ENCODE measurements at regions of chr5 and their contacts with region 1.

Region 1: DNA sequence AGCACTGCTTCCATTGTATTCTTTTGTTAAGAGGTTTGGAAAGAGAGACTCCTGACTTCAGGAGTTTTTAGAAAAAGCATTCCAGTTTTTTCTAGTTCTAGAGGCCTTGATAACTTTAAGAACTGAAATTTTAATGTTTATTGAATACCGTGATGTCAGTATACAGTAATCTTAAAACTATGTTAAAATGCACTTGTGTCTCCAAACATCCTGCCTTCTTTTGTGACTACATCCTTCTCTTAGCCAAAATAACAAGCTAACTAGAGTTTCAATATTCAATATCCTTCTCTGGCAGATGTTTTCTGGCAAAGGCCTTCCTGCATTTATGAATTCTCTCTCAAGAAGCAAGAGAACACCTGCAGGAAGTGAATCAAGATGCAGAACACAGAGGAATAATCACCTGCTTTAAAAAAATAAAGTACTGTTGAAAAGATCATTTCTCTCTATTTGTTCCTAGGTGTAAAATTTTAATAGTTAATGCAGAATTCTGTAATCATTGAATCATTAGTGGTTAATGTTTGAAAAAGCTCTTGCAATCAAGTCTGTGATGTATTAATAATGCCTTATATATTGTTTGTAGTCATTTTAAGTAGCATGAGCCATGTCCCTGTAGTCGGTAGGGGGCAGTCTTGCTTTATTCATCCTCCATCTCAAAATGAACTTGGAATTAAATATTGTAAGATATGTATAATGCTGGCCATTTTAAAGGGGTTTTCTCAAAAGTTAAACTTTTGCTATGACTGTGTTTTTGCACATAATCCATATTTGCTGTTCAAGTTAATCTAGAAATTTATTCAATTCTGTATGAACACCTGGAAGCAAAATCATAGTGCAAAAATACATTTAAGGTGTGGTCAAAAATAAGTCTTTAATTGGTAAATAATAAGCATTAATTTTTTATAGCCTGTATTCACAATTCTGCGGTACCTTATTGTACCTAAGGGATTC is 43.1 kb downstream of the NDFIP1 start:
- DNase-seq: peak; percentile 48
- ATAC-seq: peak; percentile 53
- H3K4me3 ChIP-seq: no peak overlapping the region
- H3K27ac ChIP-seq: no peak overlapping the region
- H3K4me1 ChIP-seq: peaks cover 25% of the 10 kb centered on the region
- H3K27me3 ChIP-seq: no peaks in the 10 kb centered on the region
- CTCF ChIP-seq: peak; percentile 75
- EP300 ChIP-seq: no peak
- POLR2A ChIP-seq: no peak
- RAD21 ChIP-seq: peak; percentile 73

Region 2: GRCh38 chr5:140595538-140596300 is 1556.0 kb before region 1 on chr5:
- CTCF ChIA-PET with region 1: no interaction called
- POLR2A ChIA-PET with region 1: no interaction called
- in situ Hi-C with region 1: no loop called
- intact Hi-C with region 1: no loop called
- DNase-seq: peak; percentile 36
- ATAC-seq: no peak; the same call in 2 of the 3 replicates
- H3K4me3 ChIP-seq: no peak overlapping the region
- H3K27ac ChIP-seq: no peak overlapping the region
- H3K4me1 ChIP-seq: peaks cover 13% of the 10 kb centered on the region
- H3K27me3 ChIP-seq: no peaks in the 10 kb centered on the region
- CTCF ChIP-seq: no peak
- EP300 ChIP-seq: no peak
- POLR2A ChIP-seq: no peak
- RAD21 ChIP-seq: no peak

Region 3: GRCh38 chr5:142426129-142427014 is 274.7 kb after region 1 on chr5:
- CTCF ChIA-PET with region 1: no interaction called
- POLR2A ChIA-PET with region 1: no interaction called
- in situ Hi-C with region 1: no loop called
- intact Hi-C with region 1: loop called (anchors 10 kb)
- DNase-seq: no peak
- ATAC-seq: no peak
- H3K4me3 ChIP-seq: no peak overlapping the region
- H3K27ac ChIP-seq: no peak overlapping the region
- H3K4me1 ChIP-seq: peaks cover 8% of the 10 kb centered on the region
- H3K27me3 ChIP-seq: no peaks in the 10 kb centered on the region
- CTCF ChIP-seq: no peak
- EP300 ChIP-seq: no peak
- POLR2A ChIP-seq: no peak
- RAD21 ChIP-seq: no peak

Region 4: GRCh38 chr5:142699184-142699720 is 547.5 kb after region 1 on chr5:
- CTCF ChIA-PET with region 1: interaction called, 3 read pairs
- POLR2A ChIA-PET with region 1: no interaction called
- in situ Hi-C with region 1: no loop called
- intact Hi-C with region 1: loop called (anchors 2 kb)
- DNase-seq: peak; percentile 79
- ATAC-seq: peak; percentile 99
- H3K4me3 ChIP-seq: no peak overlapping the region
- H3K27ac ChIP-seq: no peak overlapping the region
- H3K4me1 ChIP-seq: no peaks in the 10 kb centered on the region; the same call in 1 of the 2 replicates
- H3K27me3 ChIP-seq: peaks cover 0 to 6% of the 10 kb centered on the region in 2 experiments; a peak in 1 of 5 replicates
- CTCF ChIP-seq: peak; percentile 95
- EP300 ChIP-seq: no peak
- POLR2A ChIP-seq: no peak
- RAD21 ChIP-seq: peak; percentile 95